ENCODE measurements at regions of chr2 and their contacts with region 1.

Region 1: DNA sequence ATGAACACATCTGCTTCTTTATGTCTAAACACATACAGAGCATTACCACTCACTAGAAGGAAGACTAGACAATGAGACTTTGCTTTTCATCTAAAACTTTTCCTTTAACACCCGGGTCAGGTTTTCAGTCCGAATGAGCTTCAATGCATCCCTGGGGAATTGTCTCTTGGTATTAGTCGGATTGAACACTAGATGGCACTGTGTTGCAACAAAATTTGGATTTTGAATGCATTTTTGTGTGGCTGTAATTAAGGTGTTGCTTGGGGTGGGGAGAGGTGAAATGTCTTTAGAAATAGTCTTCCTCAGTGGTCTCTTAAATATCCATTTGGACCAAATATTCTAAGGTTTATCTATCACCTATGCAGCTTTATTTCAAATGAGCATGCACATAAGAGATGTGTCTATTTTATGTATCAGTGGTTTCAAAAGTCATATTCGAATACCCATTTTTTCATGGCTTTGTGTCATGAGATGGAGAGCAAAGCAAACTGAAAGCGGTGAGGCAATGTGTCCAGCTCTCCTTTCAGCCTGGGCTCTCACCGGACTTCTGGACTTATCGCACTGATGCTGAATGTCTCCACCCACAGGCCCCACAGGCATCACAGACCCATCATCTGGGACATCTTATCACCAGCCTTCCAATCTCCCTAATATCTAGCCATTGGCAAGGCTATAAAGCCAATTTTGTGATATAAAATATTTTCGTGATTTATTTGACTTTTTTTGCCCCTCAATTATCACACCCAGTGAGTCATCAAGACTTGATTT is 510.3 kb downstream of the RNF144A start:
- DNase-seq: peak in 1 of 2 donors; percentile 20
- H3K4me3 ChIP-seq: no peak overlapping the region
- H3K27ac ChIP-seq: no peak overlapping the region
- H3K4me1 ChIP-seq: no peaks in the 10 kb centered on the region
- H3K27me3 ChIP-seq: no peaks in the 10 kb centered on the region
- CTCF ChIP-seq: peak; percentile 56 to 77 (median 66)
- POLR2A ChIP-seq: no peak

Region 2: GRCh38 chr2:7272210-7272609 is 155.3 kb before region 1 on chr2:
- intact Hi-C with region 1: no loop called
- DNase-seq: no peak
- H3K4me3 ChIP-seq: no peak overlapping the region
- H3K27ac ChIP-seq: no peak overlapping the region
- H3K4me1 ChIP-seq: no peaks in the 10 kb centered on the region
- H3K27me3 ChIP-seq: no peaks in the 10 kb centered on the region
- CTCF ChIP-seq: no peak
- POLR2A ChIP-seq: no peak

Region 3: GRCh38 chr2:7510350-7510749 is 82.9 kb after region 1 on chr2:
- intact Hi-C with region 1: no loop called
- DNase-seq: no peak
- H3K4me3 ChIP-seq: no peak overlapping the region
- H3K27ac ChIP-seq: no peak overlapping the region
- H3K4me1 ChIP-seq: no peaks in the 10 kb centered on the region
- H3K27me3 ChIP-seq: no peaks in the 10 kb centered on the region
- CTCF ChIP-seq: no peak
- POLR2A ChIP-seq: no peak

Region 4: DNA sequence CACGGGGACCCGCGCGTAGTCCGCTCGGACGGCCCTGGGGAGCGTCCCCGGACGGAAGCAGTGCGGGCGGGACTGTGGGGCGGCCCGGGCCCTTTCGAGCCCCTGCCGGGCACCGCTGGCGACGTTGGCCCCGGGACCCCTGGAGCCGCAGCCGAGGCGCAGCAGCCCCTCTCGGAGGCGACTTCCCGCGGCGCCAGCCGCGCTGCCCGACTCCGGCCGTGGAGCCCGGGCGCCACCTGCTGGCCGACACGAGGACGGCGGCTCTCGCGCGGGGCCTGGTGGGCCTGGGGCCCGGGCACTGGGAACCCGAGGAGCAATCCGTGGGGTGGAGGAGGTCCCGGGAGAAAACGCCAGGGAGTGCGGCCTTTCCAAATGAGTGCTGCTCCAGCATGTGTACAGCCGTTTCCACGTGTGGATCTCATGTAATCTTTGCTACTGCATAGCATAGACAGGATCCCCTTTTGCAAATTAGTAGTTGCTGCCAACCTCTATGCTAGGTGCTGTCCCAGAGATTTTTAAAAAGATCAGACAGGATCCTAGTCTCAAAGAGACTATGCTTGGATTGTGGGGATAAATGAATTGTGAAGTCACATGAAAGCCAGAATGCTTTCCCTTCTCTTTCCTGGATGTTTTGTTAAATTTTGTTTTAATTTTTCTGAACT is 1258.4 kb after region 1 on chr2:
- intact Hi-C with region 1: loop called (anchors 5 kb)
- DNase-seq: peak; percentile 47 to 78
- H3K4me3 ChIP-seq: peak overlapping the region; percentile 31 to 72
- H3K27ac ChIP-seq: peak overlapping the region; percentile 84 to 85
- H3K4me1 ChIP-seq: peaks cover 0 to 3% of the 10 kb centered on the region in 2 donors
- H3K27me3 ChIP-seq: no peaks in the 10 kb centered on the region
- CTCF ChIP-seq: peak; percentile 83 to 100 (median 98)
- POLR2A ChIP-seq: peak in 1 of 2 donors; percentile 37